Esophagus squamous epithelium (tissue), 5 donors: ENCODE measurements at regions of chr3 and their contacts with region 1.

Region 1: GRCh38 chr3:125141596-125142419 is 70.7 kb downstream of the SLC12A8 start:
- DNase-seq: peak; percentile 14
- H3K4me3 ChIP-seq: peak overlapping the region; percentile 11 to 57 (median 36)
- H3K27ac ChIP-seq: peak overlapping the region; percentile 71 to 85 (median 81)
- H3K4me1 ChIP-seq: peaks cover 49 to 89% (median 57%) of the 10 kb centered on the region in 3 donors
- H3K27me3 ChIP-seq: no peaks in the 10 kb centered on the region
- CTCF ChIP-seq: peak in 3 of 6 experiments; percentile 25 to 36 (median 34)
- POLR2A ChIP-seq: no peak

Region 2: GRCh38 chr3:125055913-125056745 is 85.7 kb before region 1 on chr3 and contains the start of gene HEG1:
- intact Hi-C with region 1: loop called (anchors 10 kb)
- DNase-seq: peak; percentile 26
- H3K4me3 ChIP-seq: peak within 1 kb of the TSS; percentile 62 to 89 (median 77)
- H3K27ac ChIP-seq: peak within 1 kb of the TSS; percentile 87 to 99 (median 92)
- H3K4me1 ChIP-seq: peaks cover 39 to 68% (median 43%) of the 10 kb centered on the region in 3 donors
- H3K27me3 ChIP-seq: no peaks in the 10 kb centered on the region
- CTCF ChIP-seq: no peak
- POLR2A ChIP-seq: peak in 2 of 4 donors; percentile 65 to 77
- total RNA-seq, gene HEG1: 13.3 to 37.2 (median 22.5) TPM